ENCODE measurements at regions of chr2 and their contacts with region 1.

Region 1: DNA sequence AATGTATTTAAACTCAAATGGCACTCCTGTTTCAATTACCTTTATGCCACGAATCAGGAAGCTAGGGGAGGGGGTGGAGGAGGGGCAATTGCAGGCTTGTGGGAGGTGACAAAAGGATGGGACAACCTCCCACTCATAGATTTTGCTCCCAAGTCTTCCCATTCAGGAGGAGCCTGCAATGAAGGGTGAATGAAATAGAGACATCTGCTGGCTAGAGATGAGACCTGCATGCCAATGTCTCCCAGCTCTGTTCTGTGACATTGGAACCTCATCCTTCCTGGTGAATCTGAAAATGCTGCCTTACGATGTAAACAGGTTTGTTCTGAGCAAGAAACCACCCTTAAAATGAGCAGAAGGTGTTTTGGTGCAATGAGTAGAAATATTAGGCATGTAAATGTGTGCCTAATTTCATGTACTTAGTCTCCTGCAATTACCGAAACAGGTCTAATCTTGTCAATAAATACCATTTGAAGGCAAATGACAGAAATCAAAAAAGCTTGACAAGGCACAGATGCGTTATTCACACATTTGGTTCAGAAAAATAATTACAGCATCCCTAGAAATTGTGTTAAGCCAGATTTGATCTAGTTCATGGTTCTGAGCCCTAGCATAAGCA is 2.7 kb upstream of the PID1 start:
- DNase-seq: no peak
- ATAC-seq: peak; percentile 81

Region 2: GRCh38 chr2:227890495-227891079 is 1383.2 kb before region 1 on chr2:
- intact Hi-C with region 1: loop called (anchors 10 kb)
- DNase-seq: no peak
- ATAC-seq: peak; percentile 66

Region 3: GRCh38 chr2:228699400-228699799 is 574.4 kb before region 1 on chr2:
- intact Hi-C with region 1: loop called (anchors 10 kb)
- DNase-seq: no peak
- ATAC-seq: peak; percentile 73

Region 4: GRCh38 chr2:229133155-229133772 is 140.6 kb before region 1 on chr2:
- intact Hi-C with region 1: loop called (anchors 5 kb)
- DNase-seq: no peak
- ATAC-seq: peak; percentile 59

Region 5: DNA sequence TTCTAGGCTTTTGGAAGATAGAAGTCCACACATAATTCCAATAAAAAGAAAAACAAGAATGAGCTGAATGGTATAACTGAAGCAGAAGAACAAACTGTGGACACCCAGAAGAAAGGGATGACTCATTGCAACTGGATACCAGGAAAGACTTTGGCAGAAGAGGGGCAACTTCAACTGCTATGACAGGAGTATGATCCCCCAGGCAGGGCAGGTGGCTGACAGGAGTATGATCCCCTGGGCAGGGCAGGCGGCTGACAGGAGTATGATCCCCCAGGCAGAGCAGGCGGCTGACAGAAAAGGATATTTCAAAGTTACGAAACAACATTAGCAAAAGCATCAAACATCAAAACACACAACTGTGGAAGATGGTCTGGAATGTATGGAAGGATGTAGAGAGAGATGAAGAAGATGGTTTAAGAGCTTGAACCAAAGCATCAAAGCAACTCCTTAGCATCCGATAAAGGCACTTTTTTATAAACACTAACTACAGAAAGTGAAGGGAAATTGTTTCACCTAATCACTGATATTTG is 24.2 kb before region 1 on chr2:
- intact Hi-C with region 1: no loop called
- DNase-seq: no peak
- ATAC-seq: no peak

Region 6: GRCh38 chr2:229501051-229501794 is 227.4 kb after region 1 on chr2:
- intact Hi-C with region 1: no loop called
- DNase-seq: no peak
- ATAC-seq: no peak